ENCODE measurements at regions of chr22 and their contacts with region 1.

Region 1: GRCh38 chr22:23240639-23241389 is 60.5 kb downstream of the BCR start:
- DNase-seq: peak in 2 of 5 donors; percentile 25 to 66
- H3K4me3 ChIP-seq: no peak overlapping the region
- H3K4me3 Mint-ChIP-seq: peak overlapping the region in 6 of 8 donors; percentile 13 to 69 (median 36)
- H3K27ac ChIP-seq: peak overlapping the region; percentile 73
- H3K27ac Mint-ChIP-seq: peak overlapping the region; percentile 84 to 99 (median 92)
- H3K4me1 ChIP-seq: peaks cover 75% of the 10 kb centered on the region
- H3K4me1 Mint-ChIP-seq: peaks cover 48 to 94% (median 74%) of the 10 kb centered on the region in 4 donors
- H3K27me3 ChIP-seq: no peaks in the 10 kb centered on the region
- H3K27me3 Mint-ChIP-seq: no peaks in the 10 kb centered on the region

Region 2: GRCh38 chr22:23133922-23134321 is 106.9 kb before region 1 on chr22:
- CTCF ChIA-PET with region 1: no interaction called
- POLR2A ChIA-PET with region 1: no interaction called
- intact Hi-C with region 1: no loop called
- DNase-seq: no peak
- H3K4me3 ChIP-seq: no peak overlapping the region
- H3K4me3 Mint-ChIP-seq: no peak overlapping the region
- H3K27ac ChIP-seq: no peak overlapping the region
- H3K27ac Mint-ChIP-seq: peak overlapping the region in 2 of 7 donors; percentile 51 to 64
- H3K4me1 ChIP-seq: peaks cover 31% of the 10 kb centered on the region
- H3K4me1 Mint-ChIP-seq: peaks cover 9 to 34% (median 23%) of the 10 kb centered on the region in 4 donors
- H3K27me3 ChIP-seq: no peaks in the 10 kb centered on the region
- H3K27me3 Mint-ChIP-seq: no peaks in the 10 kb centered on the region

Region 3: GRCh38 chr22:23219822-23220484 is 20.9 kb before region 1 on chr22:
- CTCF ChIA-PET with region 1: interaction called, 3 read pairs
- POLR2A ChIA-PET with region 1: interaction called, 31 read pairs
- intact Hi-C with region 1: loop called (anchors 2 kb)
- DNase-seq: peak in 3 of 5 donors; percentile 21 to 68 (median 22)
- H3K4me3 ChIP-seq: no peak overlapping the region
- H3K4me3 Mint-ChIP-seq: peak overlapping the region; percentile 71 to 89 (median 84)
- H3K27ac ChIP-seq: peak overlapping the region; percentile 44
- H3K27ac Mint-ChIP-seq: peak overlapping the region; percentile 85 to 96 (median 93)
- H3K4me1 ChIP-seq: peaks cover 100% of the 10 kb centered on the region
- H3K4me1 Mint-ChIP-seq: peaks cover 75 to 100% (median 95%) of the 10 kb centered on the region in 4 donors
- H3K27me3 ChIP-seq: no peaks in the 10 kb centered on the region
- H3K27me3 Mint-ChIP-seq: no peaks in the 10 kb centered on the region

Region 4: GRCh38 chr22:23225724-23226496 is 14.9 kb before region 1 on chr22:
- CTCF ChIA-PET with region 1: interaction called, 4 read pairs
- POLR2A ChIA-PET with region 1: interaction called, 31 read pairs
- intact Hi-C with region 1: no loop called
- DNase-seq: peak; percentile 55 to 76 (median 60)
- H3K4me3 ChIP-seq: peak overlapping the region in 1 of 2 donors; percentile 21
- H3K4me3 Mint-ChIP-seq: peak overlapping the region; percentile 51 to 87 (median 74)
- H3K27ac ChIP-seq: peak overlapping the region; percentile 43
- H3K27ac Mint-ChIP-seq: peak overlapping the region; percentile 86 to 97 (median 92)
- H3K4me1 ChIP-seq: peaks cover 90% of the 10 kb centered on the region
- H3K4me1 Mint-ChIP-seq: peaks cover 41 to 99% (median 81%) of the 10 kb centered on the region in 4 donors
- H3K27me3 ChIP-seq: no peaks in the 10 kb centered on the region
- H3K27me3 Mint-ChIP-seq: no peaks in the 10 kb centered on the region

Region 5: DNA sequence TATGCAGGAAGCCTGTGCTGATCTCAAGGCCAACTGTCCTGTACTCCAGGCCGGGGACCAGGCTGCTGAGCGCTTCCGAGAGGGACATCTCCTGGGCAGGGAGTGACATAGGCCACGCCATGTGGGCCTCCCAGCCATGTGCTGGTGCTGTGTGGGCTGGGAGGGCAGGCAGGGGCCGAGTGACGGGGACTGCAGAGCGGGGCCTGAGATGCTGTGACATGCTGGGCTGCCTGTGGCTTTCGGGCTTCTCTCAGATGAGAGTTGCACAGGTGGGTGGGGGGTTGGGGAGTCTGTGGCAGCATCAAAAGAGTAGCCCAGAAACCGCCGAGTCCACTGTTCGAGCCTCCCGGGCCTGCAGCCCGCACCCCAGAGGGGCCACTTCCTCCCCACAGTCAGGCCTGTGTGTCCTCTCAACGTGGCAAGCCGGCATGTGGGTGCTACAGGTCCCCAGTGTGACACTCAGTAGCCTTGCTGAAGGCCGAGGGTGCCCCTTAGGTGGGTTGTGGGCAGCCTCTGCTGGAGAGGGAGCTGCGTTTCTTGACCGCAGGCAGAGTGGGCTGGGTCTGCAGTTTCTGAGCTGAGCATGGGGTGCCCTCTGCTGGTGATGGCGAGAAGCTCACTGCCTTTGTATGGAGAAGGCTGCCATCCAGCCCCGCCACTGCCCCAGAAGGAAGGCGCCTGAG is 40.7 kb after region 1 on chr22:
- CTCF ChIA-PET with region 1: interaction called, 11 read pairs
- POLR2A ChIA-PET with region 1: interaction called, 5 read pairs
- intact Hi-C with region 1: loop called (anchors 5 kb)
- DNase-seq: peak; percentile 70 to 79 (median 74)
- H3K4me3 ChIP-seq: no peak overlapping the region
- H3K4me3 Mint-ChIP-seq: no peak overlapping the region
- H3K27ac ChIP-seq: no peak overlapping the region
- H3K27ac Mint-ChIP-seq: peak overlapping the region in 3 of 7 donors; percentile 42 to 70 (median 52)
- H3K4me1 ChIP-seq: peaks cover 11% of the 10 kb centered on the region
- H3K4me1 Mint-ChIP-seq: peaks cover 6 to 38% (median 14%) of the 10 kb centered on the region in 4 donors
- H3K27me3 ChIP-seq: no peaks in the 10 kb centered on the region
- H3K27me3 Mint-ChIP-seq: no peaks in the 10 kb centered on the region

Region 6: GRCh38 chr22:24053481-24054226 is 812.8 kb after region 1 on chr22:
- CTCF ChIA-PET with region 1: no interaction called
- POLR2A ChIA-PET with region 1: no interaction called
- intact Hi-C with region 1: no loop called
- DNase-seq: no peak
- H3K4me3 ChIP-seq: no peak overlapping the region
- H3K4me3 Mint-ChIP-seq: no peak overlapping the region
- H3K27ac ChIP-seq: no peak overlapping the region
- H3K27ac Mint-ChIP-seq: peak overlapping the region in 4 of 7 donors; percentile 8 to 81 (median 33)
- H3K4me1 ChIP-seq: no peaks in the 10 kb centered on the region
- H3K4me1 Mint-ChIP-seq: peaks cover 0 to 2% (median 0%) of the 10 kb centered on the region in 4 donors
- H3K27me3 ChIP-seq: no peaks in the 10 kb centered on the region
- H3K27me3 Mint-ChIP-seq: no peaks in the 10 kb centered on the region